ENCODE measurements at regions of chrX and their contacts with region 1.

Region 1: GRCh38 chrX:53950130-53950733 is 94.0 kb downstream of the PHF8 start:
- DNase-seq: no peak
- H3K4me3 ChIP-seq: no peak overlapping the region
- H3K27ac ChIP-seq: no peak overlapping the region
- H3K27me3 ChIP-seq: no peaks in the 10 kb centered on the region
- CTCF ChIP-seq: no peak

Region 2: GRCh38 chrX:53116101-53116500 is 834.1 kb before region 1 on chrX:
- CTCF ChIA-PET with region 1: no interaction called
- POLR2A ChIA-PET with region 1: interaction called, 11 read pairs
- DNase-seq: no peak
- H3K4me3 ChIP-seq: no peak overlapping the region
- H3K27ac ChIP-seq: no peak overlapping the region
- H3K27me3 ChIP-seq: no peaks in the 10 kb centered on the region
- CTCF ChIP-seq: no peak

Region 3: DNA sequence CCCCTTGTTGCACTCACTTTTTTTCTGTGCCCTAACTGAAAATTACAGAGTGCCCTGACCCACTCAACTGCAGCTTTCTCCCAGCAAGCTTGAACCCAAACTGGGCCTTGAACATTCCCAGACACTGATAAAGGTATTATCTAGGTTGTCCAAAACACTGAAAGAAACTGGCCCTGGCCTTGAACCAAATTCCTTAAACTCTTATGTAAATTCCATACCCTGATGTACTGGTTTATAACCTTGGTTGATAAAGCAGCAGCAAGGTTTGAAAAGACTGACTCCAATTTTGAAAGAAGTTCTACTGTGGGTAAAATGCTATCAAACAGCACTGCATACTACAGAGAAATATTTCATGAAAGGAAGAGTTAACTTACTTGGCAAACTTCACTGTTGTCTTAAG is 31.5 kb before region 1 on chrX:
- CTCF ChIA-PET with region 1: no interaction called
- POLR2A ChIA-PET with region 1: no interaction called
- DNase-seq: no peak
- H3K4me3 ChIP-seq: no peak overlapping the region
- H3K27ac ChIP-seq: no peak overlapping the region
- H3K27me3 ChIP-seq: no peaks in the 10 kb centered on the region
- CTCF ChIP-seq: no peak

Region 4: GRCh38 chrX:53939127-53939526 is 11.1 kb before region 1 on chrX:
- CTCF ChIA-PET with region 1: no interaction called
- POLR2A ChIA-PET with region 1: no interaction called
- DNase-seq: no peak
- H3K4me3 ChIP-seq: no peak overlapping the region
- H3K27ac ChIP-seq: no peak overlapping the region
- H3K27me3 ChIP-seq: no peaks in the 10 kb centered on the region
- CTCF ChIP-seq: no peak

Measured in AG04450 (cell line).